Dendritic cell treated with granulocyte-macrophage colony-stimulating factor and Interleukin-4, amounts not matched to agents 40 ng/mL and 50 ng/mL, for 4 days (primary cell): ENCODE measurements at regions of chr5 and their contacts with region 1.

Region 1: DNA sequence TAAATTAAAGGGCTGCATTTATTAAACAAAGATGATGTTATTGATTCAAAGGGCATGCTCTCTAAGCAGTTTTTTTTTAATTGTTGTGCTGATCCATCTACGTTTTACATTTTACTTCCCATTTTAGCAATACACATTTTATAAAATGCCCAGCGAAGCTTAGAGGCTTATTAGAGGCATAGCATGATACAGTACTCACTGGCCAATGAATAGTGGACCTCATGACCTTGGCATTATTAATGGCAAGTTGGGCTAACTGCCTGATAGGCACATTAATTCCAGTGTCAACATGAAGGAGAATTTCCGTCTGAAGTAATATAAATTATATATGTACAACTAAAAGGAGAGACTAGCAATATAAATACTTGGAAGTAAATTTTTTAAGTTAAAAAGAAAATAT is 837.2 kb downstream of the EFNA5 start:
- H3K4me3 Mint-ChIP-seq: no peak overlapping the region
- H3K27ac Mint-ChIP-seq: no peak overlapping the region
- H3K4me1 Mint-ChIP-seq: no peaks in the 10 kb centered on the region
- H3K27me3 Mint-ChIP-seq: no peaks in the 10 kb centered on the region

Region 2: DNA sequence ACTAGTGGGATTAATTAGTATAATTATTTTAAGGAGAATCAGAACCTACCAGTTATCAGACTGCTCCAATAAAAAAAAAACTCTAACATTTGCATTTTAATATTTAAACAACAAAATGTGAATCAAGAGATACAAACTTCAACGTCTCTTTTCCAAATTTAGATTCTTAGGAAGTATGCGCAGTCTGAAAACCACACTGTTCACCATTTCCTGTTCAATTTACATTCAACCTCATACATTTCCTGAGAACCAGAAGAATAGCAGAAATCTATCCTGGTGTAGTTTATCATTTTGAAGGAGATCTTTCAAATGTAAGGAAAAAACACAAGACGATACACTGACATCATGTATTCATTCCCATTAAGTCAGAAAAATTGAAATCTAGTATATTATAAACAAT is 32.0 kb before region 1 on chr5:
- intact Hi-C with region 1: loop called (anchors 1 kb)
- H3K4me3 Mint-ChIP-seq: no peak overlapping the region
- H3K27ac Mint-ChIP-seq: no peak overlapping the region
- H3K4me1 Mint-ChIP-seq: no peaks in the 10 kb centered on the region
- H3K27me3 Mint-ChIP-seq: no peaks in the 10 kb centered on the region